Activated CD4-positive, alpha-beta memory T cell treated with anti-CD3 and anti-CD28 coated beads for 36 hours (primary cell): ENCODE measurements at regions of chr6 and their contacts with region 1.

Region 1: DNA sequence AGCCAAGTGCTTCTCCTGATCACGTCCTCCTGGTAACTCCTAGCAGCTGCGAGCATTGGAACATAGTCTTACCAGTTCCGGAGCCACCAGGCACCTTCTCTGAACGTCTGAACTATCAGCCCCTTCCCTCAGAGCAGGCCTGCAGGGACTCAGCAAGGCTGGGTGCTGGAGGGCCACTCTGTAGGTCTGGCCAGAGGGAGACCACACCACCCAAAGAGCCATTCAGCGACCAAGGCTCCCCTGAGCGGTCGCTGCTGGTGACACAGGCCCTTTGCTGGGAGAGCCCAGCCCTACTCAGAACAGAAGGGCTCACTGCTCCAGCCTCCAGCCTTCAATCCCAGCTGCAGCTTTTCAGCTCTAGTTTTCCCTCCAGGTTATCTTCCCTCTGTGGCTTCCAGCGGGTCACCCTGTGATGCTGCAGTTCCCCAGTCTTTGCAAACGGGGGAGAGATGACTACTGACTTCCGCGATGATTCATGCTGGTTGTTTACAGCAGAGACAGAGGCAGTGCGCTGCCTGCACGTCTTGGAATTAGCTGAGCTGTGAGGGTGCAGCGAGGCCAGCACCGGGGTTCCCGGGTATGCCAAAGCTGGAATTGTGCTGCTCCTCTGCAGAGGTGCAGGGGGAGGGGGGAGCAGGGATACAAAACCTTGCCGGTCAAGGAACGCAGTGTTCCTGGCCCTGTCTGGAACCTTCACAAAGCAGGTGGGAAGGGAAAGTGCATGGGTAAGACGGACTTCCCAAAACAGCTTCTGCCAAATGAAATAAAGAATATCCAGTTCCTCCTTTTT is 161.4 kb downstream of the LY86 start:
- DNase-seq: peak; percentile 75
- H3K4me3 Mint-ChIP-seq: no peak overlapping the region
- H3K27ac Mint-ChIP-seq: peak overlapping the region; percentile 40
- H3K4me1 Mint-ChIP-seq: peaks cover 23% of the 10 kb centered on the region
- H3K27me3 Mint-ChIP-seq: peaks cover 5% of the 10 kb centered on the region

Region 2: GRCh38 chr6:6556738-6557505 is 193.0 kb before region 1 on chr6:
- CTCF ChIA-PET with region 1: no interaction called
- POLR2A ChIA-PET with region 1: no interaction called
- intact Hi-C with region 1: no loop called
- DNase-seq: peak; percentile 62
- H3K4me3 Mint-ChIP-seq: no peak overlapping the region
- H3K27ac Mint-ChIP-seq: no peak overlapping the region
- H3K4me1 Mint-ChIP-seq: peaks cover 21% of the 10 kb centered on the region
- H3K27me3 Mint-ChIP-seq: peaks cover 2% of the 10 kb centered on the region

Region 3: GRCh38 chr6:6772751-6773150 is 22.9 kb after region 1 on chr6:
- CTCF ChIA-PET with region 1: no interaction called
- POLR2A ChIA-PET with region 1: no interaction called
- intact Hi-C with region 1: no loop called
- DNase-seq: no peak
- H3K4me3 Mint-ChIP-seq: no peak overlapping the region
- H3K27ac Mint-ChIP-seq: no peak overlapping the region
- H3K4me1 Mint-ChIP-seq: no peaks in the 10 kb centered on the region
- H3K27me3 Mint-ChIP-seq: peaks cover 15% of the 10 kb centered on the region

Region 4: GRCh38 chr6:6798448-6798860 is 48.6 kb after region 1 on chr6:
- CTCF ChIA-PET with region 1: no interaction called
- POLR2A ChIA-PET with region 1: no interaction called
- intact Hi-C with region 1: loop called (anchors 5 kb)
- DNase-seq: peak; percentile 68
- H3K4me3 Mint-ChIP-seq: no peak overlapping the region
- H3K27ac Mint-ChIP-seq: peak overlapping the region; percentile 78
- H3K4me1 Mint-ChIP-seq: peaks cover 40% of the 10 kb centered on the region
- H3K27me3 Mint-ChIP-seq: peaks cover 6% of the 10 kb centered on the region

Region 5: DNA sequence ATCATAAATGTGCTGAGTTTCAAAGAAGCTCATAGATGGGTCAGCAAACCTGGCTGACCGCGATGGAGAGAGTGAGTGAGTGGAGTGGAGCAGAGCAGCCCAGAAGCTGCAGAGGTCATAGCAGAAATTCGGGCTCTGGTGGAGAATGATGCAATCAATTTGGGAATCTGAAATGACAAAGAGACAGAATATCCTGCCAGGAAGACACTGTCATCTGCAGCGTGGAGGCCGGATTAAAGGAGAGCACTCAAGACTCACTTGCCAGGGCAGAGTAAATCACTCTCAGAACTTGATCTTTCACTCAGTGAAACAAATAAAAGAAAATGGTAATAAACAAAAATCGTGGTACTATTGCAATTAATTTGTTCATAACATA is 248.3 kb after region 1 on chr6:
- CTCF ChIA-PET with region 1: no interaction called
- POLR2A ChIA-PET with region 1: no interaction called
- intact Hi-C with region 1: no loop called
- DNase-seq: no peak
- H3K4me3 Mint-ChIP-seq: no peak overlapping the region
- H3K27ac Mint-ChIP-seq: no peak overlapping the region
- H3K4me1 Mint-ChIP-seq: no peaks in the 10 kb centered on the region
- H3K27me3 Mint-ChIP-seq: peaks cover 6% of the 10 kb centered on the region